Right ventricle myocardium inferior (tissue), 1 donor: ENCODE measurements at regions of chr21 and their contacts with region 1.

Region 1: DNA sequence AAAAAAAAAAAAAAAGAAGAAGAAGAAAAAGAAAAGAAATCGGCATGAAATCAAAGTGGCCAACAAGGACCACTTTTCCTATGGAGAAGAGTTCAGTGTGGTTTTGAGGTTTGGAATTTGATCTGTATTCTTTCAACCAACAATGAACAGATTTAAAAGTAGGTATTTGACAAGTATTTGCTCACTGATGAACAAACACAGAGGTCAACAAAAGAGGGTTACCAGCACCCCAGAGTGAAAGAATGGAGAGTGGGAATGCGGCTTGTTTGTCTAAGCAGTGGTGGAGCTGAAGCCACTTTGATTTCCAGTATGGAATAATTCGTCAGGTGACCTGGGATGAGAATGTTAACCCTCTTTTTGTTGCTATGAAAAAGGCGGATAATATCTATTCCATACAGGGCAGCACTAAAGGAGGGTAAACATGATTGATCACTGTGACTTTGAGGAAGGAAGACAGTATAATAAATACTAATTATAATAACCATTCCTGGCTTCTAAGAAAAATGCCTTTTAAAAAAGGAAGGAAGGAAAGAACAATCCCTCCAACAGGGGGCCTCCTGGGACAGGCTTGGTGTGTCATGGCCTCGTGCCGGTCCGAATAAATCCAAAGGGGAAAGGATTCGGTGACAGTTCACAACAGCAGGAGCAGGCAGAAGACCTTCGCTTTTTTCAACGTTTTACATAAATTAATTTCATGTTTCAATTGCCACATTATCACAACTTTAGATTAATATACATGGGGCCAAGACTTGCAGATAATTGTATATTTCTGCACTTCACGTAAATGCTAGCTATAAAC is 37.2 kb upstream of the SIM2 start:
- DNase-seq: no peak
- ATAC-seq: peak; percentile 39

Region 2: GRCh38 chr21:36113647-36114428 is 547.9 kb before region 1 on chr21:
- intact Hi-C with region 1: no loop called
- DNase-seq: no peak
- ATAC-seq: no peak

Region 3: DNA sequence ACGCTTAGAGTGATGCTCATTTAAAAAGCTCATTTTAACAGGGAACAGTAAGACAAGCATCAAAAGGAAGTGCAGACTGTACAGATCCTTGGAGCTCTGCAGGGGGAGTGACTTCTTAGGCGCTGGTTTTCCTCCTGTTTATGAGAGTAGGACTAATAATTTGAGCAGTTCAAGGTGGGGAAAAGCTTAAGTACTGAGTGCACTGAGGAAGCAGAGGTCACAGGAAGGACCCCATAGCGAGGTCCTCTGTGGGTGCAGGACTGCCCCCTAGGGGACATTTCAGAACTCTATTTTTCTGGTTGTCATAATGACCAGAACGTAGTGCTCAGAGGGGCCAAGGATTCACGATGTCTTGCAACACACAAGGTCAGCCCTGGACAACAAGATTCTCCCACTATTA is 192.7 kb after region 1 on chr21:
- intact Hi-C with region 1: loop called (anchors 2 kb)
- DNase-seq: no peak
- ATAC-seq: peak; percentile 56